ENCODE measurements at regions of chr7 and their contacts with region 1.

Region 1: GRCh38 chr7:149067876-149068275 is 22.6 kb downstream of the ZNF786 start:
- DNase-seq: peak in 1 of 2 experiments; percentile 13
- H3K4me3 ChIP-seq: no peak overlapping the region
- H3K4me3 Mint-ChIP-seq: no peak overlapping the region
- H3K27ac Mint-ChIP-seq: no peak overlapping the region
- H3K4me1 ChIP-seq: peaks cover 3% of the 10 kb centered on the region; the same call in 1 of the 2 replicates
- H3K4me1 Mint-ChIP-seq: no peaks in the 10 kb centered on the region
- H3K27me3 ChIP-seq: no peaks in the 10 kb centered on the region
- H3K27me3 Mint-ChIP-seq: no peaks in the 10 kb centered on the region
- CTCF ChIP-seq: no peak

Region 2: DNA sequence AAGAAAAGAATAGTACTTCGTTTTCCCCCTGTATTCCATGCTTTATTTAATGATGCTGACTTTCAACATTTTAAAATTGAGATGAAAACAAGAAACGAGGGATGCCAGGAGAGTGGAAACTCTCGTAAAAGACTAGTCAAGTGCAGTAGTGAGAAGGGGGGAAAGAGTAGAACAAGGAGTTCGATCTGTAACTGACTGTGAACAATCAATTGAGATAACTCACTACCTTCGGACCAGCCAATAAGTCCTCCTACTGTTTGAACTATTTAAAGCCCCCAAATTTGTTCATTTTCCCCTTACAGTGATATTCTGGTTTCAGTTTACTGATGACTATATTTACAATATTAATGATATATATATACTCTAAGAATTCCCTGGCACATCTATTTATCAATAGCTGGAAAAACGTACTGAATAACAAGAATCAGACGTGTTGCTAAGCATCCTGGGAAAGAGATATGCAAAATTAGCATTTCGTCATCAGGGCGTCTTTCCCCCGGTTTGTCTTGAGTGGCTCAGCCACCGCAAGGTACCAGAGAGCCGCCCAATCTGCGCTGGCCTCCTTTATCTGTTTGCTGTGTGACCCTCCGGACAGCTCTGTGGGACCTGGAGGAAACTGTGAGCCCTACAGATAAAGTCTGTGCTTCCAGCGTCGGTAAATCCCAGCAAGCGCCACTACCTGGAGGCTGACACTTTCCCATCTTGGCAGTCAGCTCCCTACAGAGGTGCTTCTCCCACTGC is 80.7 kb before region 1 on chr7:
- CTCF ChIA-PET with region 1: interaction called, 5 read pairs
- POLR2A ChIA-PET with region 1: no interaction called
- intact Hi-C with region 1: loop called (anchors 1 kb)
- DNase-seq: peak; percentile 90 to 95
- H3K4me3 ChIP-seq: peak overlapping the region; percentile 50
- H3K4me3 Mint-ChIP-seq: peak overlapping the region; percentile 84
- H3K27ac Mint-ChIP-seq: peak overlapping the region; percentile 85
- H3K4me1 ChIP-seq: peaks cover 13% of the 10 kb centered on the region
- H3K4me1 Mint-ChIP-seq: peaks cover 44% of the 10 kb centered on the region
- H3K27me3 ChIP-seq: no peaks in the 10 kb centered on the region
- H3K27me3 Mint-ChIP-seq: no peaks in the 10 kb centered on the region
- CTCF ChIP-seq: no peak

Region 3: DNA sequence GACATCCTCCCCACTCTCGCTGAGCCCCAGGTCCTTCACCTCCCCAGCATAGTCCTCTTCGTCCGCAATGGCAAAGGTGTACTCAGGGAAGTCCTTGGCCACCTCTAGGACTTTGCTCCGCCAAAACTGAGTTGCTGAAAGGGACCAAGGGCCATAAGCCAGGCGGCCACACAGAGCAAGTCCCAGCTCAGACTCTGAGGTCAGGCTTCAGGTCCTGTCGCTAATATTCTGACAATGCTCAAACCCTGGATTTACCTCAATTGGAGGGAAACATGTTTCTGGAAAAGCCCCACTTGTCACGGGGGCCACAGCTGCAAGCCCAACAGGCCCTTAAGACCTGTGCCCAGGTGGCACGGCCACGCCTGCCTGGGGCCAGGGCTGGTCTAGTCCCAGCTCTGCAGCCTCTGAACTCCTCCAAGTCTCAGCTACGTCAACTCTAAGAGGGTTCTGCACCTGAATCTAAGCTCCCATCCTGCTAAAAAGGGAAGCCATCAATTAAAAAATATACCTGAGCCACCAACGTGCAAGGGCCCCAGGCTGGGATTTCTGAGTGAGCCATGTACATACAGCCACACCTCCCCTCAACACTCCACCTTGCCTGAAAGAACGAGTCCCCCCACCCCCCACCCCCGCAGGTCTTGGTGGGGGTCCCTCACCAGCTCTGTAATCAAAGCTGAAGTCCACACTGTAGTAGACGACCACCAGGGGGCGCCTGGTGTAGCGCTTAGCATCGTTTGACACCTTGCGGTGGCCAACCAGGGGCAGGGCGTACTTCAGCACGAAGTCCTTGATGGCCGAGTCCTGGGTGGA is 62.4 kb before region 1 on chr7:
- CTCF ChIA-PET with region 1: interaction called, 31 read pairs
- POLR2A ChIA-PET with region 1: interaction called, 3 read pairs
- intact Hi-C with region 1: loop called (anchors 1 kb)
- DNase-seq: peak; percentile 75 to 76
- H3K4me3 ChIP-seq: no peak overlapping the region
- H3K4me3 Mint-ChIP-seq: no peak overlapping the region
- H3K27ac Mint-ChIP-seq: no peak overlapping the region
- H3K4me1 ChIP-seq: no peaks in the 10 kb centered on the region
- H3K4me1 Mint-ChIP-seq: no peaks in the 10 kb centered on the region
- H3K27me3 ChIP-seq: no peaks in the 10 kb centered on the region
- H3K27me3 Mint-ChIP-seq: no peaks in the 10 kb centered on the region
- CTCF ChIP-seq: peak; percentile 72 to 90

Region 4: GRCh38 chr7:149125863-149126661 is 58.2 kb after region 1 on chr7 and contains the start of gene ZNF425:
- CTCF ChIA-PET with region 1: interaction called, 3 read pairs
- POLR2A ChIA-PET with region 1: no interaction called
- intact Hi-C with region 1: loop called (anchors 2 kb)
- DNase-seq: peak; percentile 93 to 97
- H3K4me3 ChIP-seq: peak within 1 kb of the TSS; percentile 74
- H3K4me3 Mint-ChIP-seq: peak within 1 kb of the TSS; percentile 75
- H3K27ac Mint-ChIP-seq: peak within 1 kb of the TSS; percentile 84
- H3K4me1 ChIP-seq: peaks cover 7% of the 10 kb centered on the region; the same call in 1 of the 2 replicates
- H3K4me1 Mint-ChIP-seq: peaks cover 11% of the 10 kb centered on the region
- H3K27me3 ChIP-seq: no peaks in the 10 kb centered on the region
- H3K27me3 Mint-ChIP-seq: no peaks in the 10 kb centered on the region
- CTCF ChIP-seq: peak; percentile 94
- total RNA-seq, gene ZNF425: 2.6 and 4.0 TPM in 2 replicates

Region 5: DNA sequence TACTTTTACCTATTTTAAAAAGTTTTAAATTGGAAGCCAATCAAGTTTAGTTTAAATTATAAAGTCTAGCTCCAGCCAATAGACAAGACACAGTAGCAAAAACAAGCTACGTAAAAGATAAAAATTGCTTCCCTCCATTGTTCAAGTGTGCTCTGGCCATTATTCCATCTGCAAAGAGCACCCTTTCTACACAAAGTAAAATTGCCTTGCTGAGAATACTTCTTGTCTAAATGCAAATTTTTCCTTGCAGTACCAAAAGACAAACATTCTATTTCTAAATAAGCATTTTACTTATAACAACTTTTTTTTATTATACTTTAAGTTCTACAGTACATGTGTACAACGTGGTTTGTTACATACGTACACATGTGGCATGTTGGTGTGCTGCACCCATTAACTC is 505.6 kb after region 1 on chr7:
- CTCF ChIA-PET with region 1: no interaction called
- POLR2A ChIA-PET with region 1: no interaction called
- intact Hi-C with region 1: no loop called
- DNase-seq: no peak
- H3K4me3 ChIP-seq: no peak overlapping the region
- H3K4me3 Mint-ChIP-seq: no peak overlapping the region
- H3K27ac Mint-ChIP-seq: no peak overlapping the region
- H3K4me1 ChIP-seq: no peaks in the 10 kb centered on the region
- H3K4me1 Mint-ChIP-seq: no peaks in the 10 kb centered on the region
- H3K27me3 ChIP-seq: no peaks in the 10 kb centered on the region
- H3K27me3 Mint-ChIP-seq: no peaks in the 10 kb centered on the region
- CTCF ChIP-seq: no peak